ENCODE measurements at regions of chr19 and their contacts with region 1.

Region 1: GRCh38 chr19:8412783-8413628 is at the start of gene MARCHF2:
- DNase-seq: peak; percentile 97
- ATAC-seq: peak; percentile 100
- H3K4me3 ChIP-seq: peak within 1 kb of the TSS; percentile 67
- H3K27ac ChIP-seq: no peak within 1 kb of the TSS; the same call in 1 of the 2 replicates
- H3K4me1 ChIP-seq: peaks cover 4% of the 10 kb centered on the region
- H3K27me3 ChIP-seq: no peaks in the 10 kb centered on the region
- CTCF ChIP-seq: peak; percentile 74
- POLR2A ChIP-seq: no peak
- RAD21 ChIP-seq: peak; percentile 43
- total RNA-seq, gene MARCHF2: 48.6 and 58.8 TPM in 2 replicates

Region 2: DNA sequence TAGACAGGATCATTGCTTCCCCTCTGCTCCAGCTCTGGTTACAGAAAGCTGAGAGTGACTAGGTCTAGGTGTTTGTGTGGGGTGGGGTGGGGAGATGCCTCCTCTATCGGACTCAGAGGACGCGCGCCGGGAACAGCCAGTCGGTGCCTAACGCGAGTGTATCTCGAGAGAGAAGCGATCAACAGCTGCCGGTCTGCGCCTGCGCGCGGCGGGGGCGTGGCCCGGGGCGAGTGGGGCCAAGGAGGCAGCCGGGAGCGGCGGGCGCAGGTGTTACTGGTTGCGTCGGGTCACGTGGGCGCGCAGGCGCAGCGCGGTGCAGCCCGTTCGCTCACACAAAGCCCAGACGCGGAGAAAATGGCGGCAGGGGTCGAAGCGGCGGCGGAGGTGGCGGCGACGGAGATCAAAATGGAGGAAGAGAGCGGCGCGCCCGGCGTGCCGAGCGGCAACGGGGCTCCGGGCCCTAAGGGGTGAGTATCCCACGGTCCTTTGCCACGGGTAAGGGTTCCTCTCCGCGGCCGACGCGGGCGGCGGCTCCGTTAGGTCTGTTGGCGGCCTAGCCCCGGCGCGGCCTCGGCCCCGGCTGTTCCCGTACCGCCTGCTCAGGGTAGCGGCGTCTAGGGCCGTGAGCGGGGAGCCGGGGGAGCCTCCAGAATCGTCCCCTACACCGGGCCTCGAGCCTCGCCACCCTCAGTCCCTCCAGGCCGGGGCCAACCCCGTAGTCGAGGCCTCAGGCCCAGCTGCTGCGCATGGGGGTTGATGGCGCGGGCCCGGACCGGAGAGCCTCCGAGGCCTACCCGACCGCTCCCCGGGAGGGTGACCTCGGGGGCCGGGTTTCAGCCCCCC is 31.9 kb after region 1 on chr19 and contains the start of gene HNRNPM:
- CTCF ChIA-PET with region 1: no interaction called
- POLR2A ChIA-PET with region 1: interaction called, 3 read pairs
- dilution Hi-C with region 1: no loop called
- in situ Hi-C with region 1: no loop called
- intact Hi-C with region 1: loop called (anchors 5 kb)
- DNase-seq: peak; percentile 95
- ATAC-seq: peak; percentile 95
- H3K4me3 ChIP-seq: peak within 1 kb of the TSS; percentile 83
- H3K27ac ChIP-seq: peak within 1 kb of the TSS; percentile 88
- H3K4me1 ChIP-seq: peaks cover 5% of the 10 kb centered on the region
- H3K27me3 ChIP-seq: no peaks in the 10 kb centered on the region
- CTCF ChIP-seq: no peak
- POLR2A ChIP-seq: peak; percentile 95
- RAD21 ChIP-seq: no peak
- total RNA-seq, gene HNRNPM: 75.6 and 90.5 TPM in 2 replicates

Region 3: DNA sequence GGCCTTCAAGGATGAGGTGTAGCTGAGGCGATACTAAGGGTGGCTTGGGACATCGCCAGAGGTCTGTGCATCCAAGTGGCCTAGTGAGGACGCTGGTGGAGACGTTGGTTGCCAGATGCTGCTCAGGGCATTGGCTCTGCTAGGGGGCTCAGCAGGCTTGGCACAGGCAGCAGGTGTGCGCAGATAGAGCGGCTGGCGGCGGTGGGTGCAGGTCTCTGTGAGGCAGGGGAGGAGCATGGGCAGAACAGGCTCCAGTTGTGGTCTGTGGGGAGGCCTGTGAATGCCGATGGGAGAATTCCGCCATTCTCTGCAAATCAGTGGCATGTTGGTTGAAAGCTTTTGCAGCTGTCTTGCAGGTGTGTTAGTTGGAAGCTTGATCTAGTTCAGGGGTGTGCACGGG is 68.2 kb after region 1 on chr19:
- CTCF ChIA-PET with region 1: no interaction called
- POLR2A ChIA-PET with region 1: interaction called, 10 read pairs
- dilution Hi-C with region 1: no loop called
- in situ Hi-C with region 1: no loop called
- intact Hi-C with region 1: no loop called
- DNase-seq: no peak
- ATAC-seq: no peak
- H3K4me3 ChIP-seq: no peak overlapping the region
- H3K27ac ChIP-seq: no peak overlapping the region
- H3K4me1 ChIP-seq: peaks cover 5% of the 10 kb centered on the region
- H3K27me3 ChIP-seq: no peaks in the 10 kb centered on the region
- CTCF ChIP-seq: no peak
- POLR2A ChIP-seq: no peak
- RAD21 ChIP-seq: no peak

Region 4: GRCh38 chr19:8858260-8858659 is 445.3 kb after region 1 on chr19:
- CTCF ChIA-PET with region 1: no interaction called
- POLR2A ChIA-PET with region 1: no interaction called
- dilution Hi-C with region 1: no loop called
- in situ Hi-C with region 1: no loop called
- intact Hi-C with region 1: no loop called
- DNase-seq: no peak
- ATAC-seq: no peak
- H3K4me3 ChIP-seq: no peak overlapping the region
- H3K27ac ChIP-seq: no peak overlapping the region
- H3K4me1 ChIP-seq: no peaks in the 10 kb centered on the region
- H3K27me3 ChIP-seq: no peaks in the 10 kb centered on the region
- CTCF ChIP-seq: no peak
- POLR2A ChIP-seq: no peak
- RAD21 ChIP-seq: no peak